Mammary epithelial cell (primary cell): ENCODE measurements at regions of chr12 and their contacts with region 1.

Region 1: DNA sequence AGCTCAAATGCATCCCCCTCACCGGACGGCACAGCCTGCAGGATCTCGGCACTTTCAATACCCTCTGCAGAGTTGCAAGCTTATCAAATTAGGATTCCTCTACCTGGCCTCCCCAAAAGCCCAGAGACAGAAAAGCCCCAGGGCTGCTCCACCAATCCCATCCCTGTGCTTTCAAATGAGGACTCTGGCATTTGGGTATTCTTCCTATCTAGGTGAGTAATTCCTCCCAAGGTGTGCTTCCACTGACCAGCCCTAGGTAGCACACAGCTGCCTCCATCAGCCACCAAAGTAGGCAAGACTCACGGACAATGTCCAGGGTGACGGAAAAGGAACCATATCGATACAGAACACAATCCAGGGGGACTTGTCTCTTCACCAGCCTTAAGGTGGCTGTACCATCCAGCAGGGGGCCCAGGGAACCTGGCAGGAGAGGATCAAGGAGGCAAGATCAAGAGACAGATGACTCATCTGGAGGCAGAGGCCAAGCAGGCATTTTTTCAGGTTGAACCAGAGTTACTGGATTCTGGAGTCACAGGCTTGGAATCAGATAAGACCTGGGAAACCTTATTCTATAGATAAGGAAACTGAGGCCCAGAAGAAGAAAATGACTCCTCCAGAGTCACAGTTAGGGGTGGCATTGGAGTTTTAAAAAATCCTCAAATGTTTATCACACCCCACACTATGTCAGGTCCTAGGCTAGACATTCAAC is 9.9 kb downstream of the PMEL start:
- DNase-seq: peak; percentile 88
- H3K4me3 ChIP-seq: no peak overlapping the region
- H3K27ac ChIP-seq: no peak overlapping the region
- H3K4me1 ChIP-seq: peaks cover 24% of the 10 kb centered on the region
- H3K27me3 ChIP-seq: no peaks in the 10 kb centered on the region
- CTCF ChIP-seq: peak; percentile 84 to 88

Region 2: DNA sequence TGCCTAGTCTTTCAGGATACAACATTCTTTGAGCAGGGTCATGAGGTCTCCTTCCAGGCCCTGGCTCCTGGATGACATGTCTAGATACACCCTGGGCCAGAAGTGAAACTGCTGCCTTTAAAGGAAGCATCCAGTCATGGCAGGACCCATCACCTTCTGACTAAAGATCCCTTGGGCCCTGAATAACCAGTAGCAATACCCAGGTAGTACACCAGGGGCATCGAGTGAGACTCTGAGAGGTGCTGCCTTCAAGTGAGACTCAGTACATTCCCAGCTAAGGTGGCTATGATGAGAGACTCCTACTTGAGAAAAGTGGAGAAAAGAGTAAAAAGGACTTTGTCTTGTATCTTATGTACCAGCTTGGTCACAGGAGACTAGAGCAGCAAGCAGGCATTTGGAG is 440.3 kb before region 1 on chr12:
- CTCF ChIA-PET with region 1: no interaction called
- dilution Hi-C with region 1: no loop called
- in situ Hi-C with region 1: no loop called
- intact Hi-C with region 1: no loop called
- DNase-seq: no peak
- H3K4me3 ChIP-seq: no peak overlapping the region
- H3K27ac ChIP-seq: no peak overlapping the region
- H3K4me1 ChIP-seq: no peaks in the 10 kb centered on the region
- H3K27me3 ChIP-seq: peaks cover 4% of the 10 kb centered on the region
- CTCF ChIP-seq: no peak

Region 3: DNA sequence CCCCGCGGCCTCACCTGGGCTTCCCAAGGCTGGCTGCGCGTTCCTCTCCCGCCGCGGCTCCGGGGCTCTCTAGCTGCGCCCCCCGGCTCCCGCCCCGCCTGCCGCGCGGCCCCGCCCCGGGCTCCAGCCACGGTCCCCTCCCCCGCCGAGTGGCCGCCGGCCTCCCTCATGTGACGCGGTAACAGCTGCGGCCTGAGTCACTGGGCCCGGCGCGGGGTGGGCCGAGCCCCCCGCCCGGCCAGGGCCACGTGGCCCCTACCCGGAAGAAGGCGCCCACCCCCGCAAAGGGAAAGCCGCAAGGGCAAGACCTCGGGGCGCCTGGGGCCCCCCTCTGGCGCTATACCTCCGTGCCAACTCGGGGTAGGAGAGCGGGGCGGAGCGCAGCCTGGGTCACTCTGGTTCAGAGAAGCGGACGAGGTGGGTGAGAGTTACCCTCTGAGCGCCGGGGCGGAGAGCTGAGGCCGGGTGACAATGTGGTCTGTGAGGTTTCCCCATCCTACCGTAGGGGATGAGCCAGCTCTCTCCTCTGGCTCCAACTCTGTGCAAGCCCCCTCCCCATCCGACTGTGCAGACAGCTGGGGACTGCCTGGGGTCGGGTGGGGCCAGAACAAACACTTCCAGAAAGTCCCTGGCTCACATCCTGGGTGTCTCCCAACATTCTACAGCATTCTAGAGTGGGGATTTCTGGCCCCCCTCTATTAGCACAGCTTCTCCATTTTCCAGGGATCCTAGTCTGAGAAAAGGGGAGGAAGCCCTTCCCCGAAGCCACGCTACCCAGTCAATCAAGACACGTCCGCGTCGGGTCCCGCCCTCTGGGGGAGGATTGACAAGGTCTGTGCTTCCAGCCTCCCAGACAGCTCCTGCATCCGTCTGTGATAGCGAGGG is 226.8 kb before region 1 on chr12 and contains the start of gene CD63:
- CTCF ChIA-PET with region 1: no interaction called
- dilution Hi-C with region 1: loop called (anchors 10 kb)
- in situ Hi-C with region 1: no loop called
- intact Hi-C with region 1: no loop called
- DNase-seq: peak; percentile 93
- H3K4me3 ChIP-seq: peak within 1 kb of the TSS; percentile 77 to 91 (median 89)
- H3K27ac ChIP-seq: peak within 1 kb of the TSS; percentile 81
- H3K4me1 ChIP-seq: peaks cover 24% of the 10 kb centered on the region
- H3K27me3 ChIP-seq: no peaks in the 10 kb centered on the region
- CTCF ChIP-seq: no peak
- total RNA-seq, gene CD63: 552 to 814 TPM

Region 4: DNA sequence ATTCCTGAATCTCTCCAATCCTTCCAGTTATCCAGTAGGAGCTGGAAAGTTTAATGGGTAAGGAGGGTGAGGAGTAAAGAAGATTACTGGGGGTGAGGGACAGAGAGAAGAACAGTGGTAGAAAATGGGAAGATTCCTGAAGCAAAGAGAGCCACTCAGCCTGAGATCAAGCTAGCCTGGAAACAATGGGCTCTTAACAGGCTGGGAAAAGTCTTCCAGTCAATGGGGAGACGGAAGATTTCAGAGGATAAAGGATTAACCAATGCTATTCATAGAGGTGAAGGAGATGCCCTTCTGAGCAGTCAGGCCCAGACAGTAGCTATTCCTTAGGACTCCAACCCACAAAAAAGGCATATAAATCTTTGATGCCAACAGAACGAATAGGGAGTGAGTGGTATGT is 198.3 kb before region 1 on chr12:
- CTCF ChIA-PET with region 1: no interaction called
- dilution Hi-C with region 1: loop called (anchors 5 kb)
- in situ Hi-C with region 1: no loop called
- intact Hi-C with region 1: no loop called
- DNase-seq: no peak
- H3K4me3 ChIP-seq: no peak overlapping the region
- H3K27ac ChIP-seq: no peak overlapping the region
- H3K4me1 ChIP-seq: no peaks in the 10 kb centered on the region
- H3K27me3 ChIP-seq: no peaks in the 10 kb centered on the region
- CTCF ChIP-seq: no peak

Region 5: GRCh38 chr12:55966408-55967281 is 10.7 kb after region 1 on chr12 and contains the start of gene CDK2:
- CTCF ChIA-PET with region 1: no interaction called
- dilution Hi-C with region 1: no loop called
- in situ Hi-C with region 1: no loop called
- intact Hi-C with region 1: loop called (anchors 1 kb)
- DNase-seq: peak; percentile 78
- H3K4me3 ChIP-seq: peak within 1 kb of the TSS; percentile 86 to 96 (median 91)
- H3K27ac ChIP-seq: peak within 1 kb of the TSS; percentile 87
- H3K4me1 ChIP-seq: peaks cover 26% of the 10 kb centered on the region
- H3K27me3 ChIP-seq: no peaks in the 10 kb centered on the region
- CTCF ChIP-seq: no peak
- total RNA-seq, gene CDK2: 17.5 to 54.9 TPM

Region 6: GRCh38 chr12:55973598-55974307 is 17.8 kb after region 1 on chr12 and contains the start of gene RAB5B:
- CTCF ChIA-PET with region 1: no interaction called
- dilution Hi-C with region 1: no loop called
- in situ Hi-C with region 1: no loop called
- intact Hi-C with region 1: loop called (anchors 2 kb)
- DNase-seq: peak; percentile 100
- H3K4me3 ChIP-seq: peak within 1 kb of the TSS; percentile 94 to 98 (median 96)
- H3K27ac ChIP-seq: peak within 1 kb of the TSS; percentile 95
- H3K4me1 ChIP-seq: peaks cover 17% of the 10 kb centered on the region
- H3K27me3 ChIP-seq: no peaks in the 10 kb centered on the region
- CTCF ChIP-seq: no peak
- total RNA-seq, gene RAB5B: 79.4 to 92.5 TPM

Region 7: DNA sequence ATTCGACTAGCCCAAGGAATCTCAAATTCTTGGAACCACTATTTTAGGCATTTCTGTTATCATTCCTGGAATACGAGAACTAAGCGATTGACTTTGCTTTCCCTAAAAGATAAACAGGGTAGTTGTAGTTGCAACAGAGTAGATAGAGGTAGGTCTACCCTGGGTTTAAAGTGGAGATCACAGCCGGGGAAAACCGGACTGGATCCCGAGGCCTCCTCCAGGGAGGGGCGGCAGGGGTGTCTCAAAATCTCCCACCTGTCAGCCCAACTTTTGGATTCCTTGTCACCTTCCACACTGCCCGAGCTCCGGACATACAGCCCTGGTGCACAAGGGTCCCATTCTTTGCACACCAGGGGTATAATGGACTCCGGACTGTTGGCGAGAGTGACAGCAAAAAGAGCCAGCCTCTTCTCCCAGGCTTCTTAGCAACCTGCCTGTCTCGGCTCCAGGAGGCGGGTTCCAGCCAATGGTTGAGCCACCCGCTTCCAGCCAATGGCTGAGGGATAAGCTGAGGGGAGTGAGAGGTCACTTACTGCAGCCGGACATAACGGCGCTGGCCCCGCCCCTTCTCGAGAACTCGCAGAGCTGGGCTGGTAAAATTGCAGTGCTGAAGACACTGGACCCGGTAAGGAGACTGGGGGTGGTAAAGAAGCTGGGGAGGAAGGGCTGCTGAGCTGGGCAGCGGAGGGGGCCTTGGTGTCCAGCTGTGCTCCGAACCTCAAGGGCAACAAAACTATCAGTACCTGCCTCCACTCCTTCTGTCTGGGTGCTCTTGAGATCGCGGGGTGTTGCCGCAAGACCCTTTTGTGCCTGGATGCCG is 41.0 kb after region 1 on chr12 and contains the start of gene SUOX:
- CTCF ChIA-PET with region 1: no interaction called
- dilution Hi-C with region 1: loop called (anchors 5 kb)
- in situ Hi-C with region 1: no loop called
- intact Hi-C with region 1: loop called (anchors 1 kb)
- DNase-seq: peak; percentile 96
- H3K4me3 ChIP-seq: peak within 1 kb of the TSS; percentile 67 to 82 (median 75)
- H3K27ac ChIP-seq: peak within 1 kb of the TSS; percentile 63
- H3K4me1 ChIP-seq: peaks cover 11% of the 10 kb centered on the region
- H3K27me3 ChIP-seq: no peaks in the 10 kb centered on the region
- CTCF ChIP-seq: no peak
- total RNA-seq, gene SUOX: 10.7 to 14.7 TPM

Region 8: DNA sequence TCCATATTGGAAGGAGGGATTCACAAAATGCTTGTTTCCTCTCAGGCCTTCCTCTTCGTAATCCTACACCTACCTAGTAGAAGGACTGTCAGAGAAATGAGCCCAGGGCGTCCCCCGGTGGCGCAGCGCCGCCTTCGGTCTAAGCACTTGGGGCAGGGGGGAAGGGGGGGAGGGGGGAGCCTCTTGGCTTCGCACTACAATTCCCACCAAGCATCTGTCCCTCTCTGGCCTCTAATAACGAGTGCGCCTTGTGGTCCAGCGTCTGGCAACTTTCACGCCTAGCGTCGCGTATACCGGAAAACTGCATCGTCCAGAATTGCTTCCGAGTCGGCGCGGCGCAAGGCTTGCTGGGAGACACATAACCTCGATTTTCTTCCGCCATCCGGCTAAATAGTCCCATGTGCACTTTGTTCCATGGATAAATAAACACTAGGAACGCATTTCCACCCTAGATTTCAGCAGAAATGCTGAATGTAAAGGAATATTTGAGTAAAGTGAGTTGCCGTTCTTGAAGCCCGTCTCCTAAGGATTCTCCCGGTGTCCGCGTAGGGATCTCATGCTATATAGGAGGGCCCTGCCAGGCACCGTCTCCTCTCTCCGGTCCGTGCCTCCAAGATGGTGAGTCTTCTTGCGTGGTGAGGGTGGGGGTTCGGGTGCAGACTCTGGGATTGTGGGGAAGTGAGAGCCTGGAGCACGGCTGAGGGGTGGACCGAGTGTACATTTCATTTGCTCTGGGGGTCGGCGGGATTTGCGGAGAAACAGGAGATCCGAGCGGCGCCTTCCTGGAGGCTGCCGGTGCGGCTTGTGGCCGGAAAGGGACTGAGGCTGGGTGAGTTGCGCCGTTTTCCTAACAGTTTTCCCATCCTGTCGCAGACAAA is 85.8 kb after region 1 on chr12 and contains the start of gene RPS26:
- CTCF ChIA-PET with region 1: no interaction called
- dilution Hi-C with region 1: no loop called
- in situ Hi-C with region 1: no loop called
- intact Hi-C with region 1: loop called (anchors 1 kb)
- DNase-seq: peak; percentile 99
- H3K4me3 ChIP-seq: peak within 1 kb of the TSS; percentile 78 to 91 (median 86)
- H3K27ac ChIP-seq: peak within 1 kb of the TSS; percentile 91
- H3K4me1 ChIP-seq: peaks cover 19% of the 10 kb centered on the region
- H3K27me3 ChIP-seq: no peaks in the 10 kb centered on the region
- CTCF ChIP-seq: peak; percentile 16 to 54
- total RNA-seq, gene RPS26: 46.4 to 331 TPM